ENCODE measurements at regions of chr9 and their contacts with region 1.

Region 1: GRCh38 chr9:113401027-113401792 is at the start of gene ALAD:
- DNase-seq: peak; percentile 99
- H3K4me3 Mint-ChIP-seq: peak within 1 kb of the TSS; percentile 93
- H3K27ac Mint-ChIP-seq: no peak within 1 kb of the TSS
- H3K4me1 Mint-ChIP-seq: peaks cover 20% of the 10 kb centered on the region
- H3K27me3 Mint-ChIP-seq: no peaks in the 10 kb centered on the region
- total RNA-seq, gene ALAD: 16.1 to 17.7 TPM

Region 2: GRCh38 chr9:113340017-113340699 is 61.1 kb before region 1 on chr9 and contains the start of gene WDR31:
- CTCF ChIA-PET with region 1: interaction called, 6 read pairs
- intact Hi-C with region 1: loop called (anchors 2 kb)
- DNase-seq: peak; percentile 85
- H3K4me3 Mint-ChIP-seq: peak within 1 kb of the TSS; percentile 84
- H3K27ac Mint-ChIP-seq: peak within 1 kb of the TSS; percentile 55
- H3K4me1 Mint-ChIP-seq: peaks cover 35% of the 10 kb centered on the region
- H3K27me3 Mint-ChIP-seq: peaks cover 4% of the 10 kb centered on the region
- total RNA-seq, gene WDR31: 0.81 to 0.88 TPM

Region 3: DNA sequence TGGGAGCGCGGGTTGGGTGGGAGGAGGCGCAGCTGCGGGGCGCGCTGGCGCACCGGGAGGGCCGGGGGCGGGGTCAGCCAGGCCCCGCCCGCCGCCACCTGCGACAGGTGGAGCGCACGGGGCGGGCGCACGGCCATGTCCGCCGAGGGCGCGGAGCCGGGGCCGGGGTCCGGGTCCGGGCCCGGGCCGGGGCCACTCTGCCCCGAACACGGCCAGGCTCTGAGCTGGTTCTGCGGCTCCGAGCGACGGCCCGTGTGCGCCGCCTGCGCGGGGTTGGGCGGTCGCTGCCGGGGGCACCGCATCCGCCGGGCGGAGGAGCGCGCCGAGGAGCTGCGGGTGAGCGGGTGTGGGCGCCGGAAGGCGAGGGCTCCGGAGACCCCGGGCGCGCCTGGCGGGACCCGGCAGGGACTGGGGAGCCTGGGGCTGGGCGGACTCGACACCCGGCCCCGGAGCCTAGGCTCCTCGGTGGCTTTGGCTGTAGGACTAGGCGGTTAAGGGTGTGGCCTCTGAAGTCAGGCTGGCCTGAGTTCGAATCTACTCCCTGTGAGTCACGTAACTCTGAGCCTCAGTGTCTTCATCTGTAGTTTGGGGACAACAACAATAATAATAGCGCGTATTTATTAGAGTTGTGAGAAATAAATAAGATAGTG is 51.6 kb before region 1 on chr9 and contains the start of gene BSPRY:
- CTCF ChIA-PET with region 1: interaction called, 5 read pairs
- intact Hi-C with region 1: loop called (anchors 2 kb)
- DNase-seq: peak; percentile 42
- H3K4me3 Mint-ChIP-seq: peak within 1 kb of the TSS; percentile 87
- H3K27ac Mint-ChIP-seq: peak within 1 kb of the TSS; percentile 84
- H3K4me1 Mint-ChIP-seq: peaks cover 61% of the 10 kb centered on the region
- H3K27me3 Mint-ChIP-seq: peaks cover 26% of the 10 kb centered on the region
- total RNA-seq, gene BSPRY: 7.7 to 8.3 TPM

Measured in activated naive CD4-positive, alpha-beta T cell treated with anti-CD3 and anti-CD28 coated beads for 36 hours (primary cell).